Heart right ventricle (tissue), 16 donors: ENCODE measurements at regions of chr11 and their contacts with region 1.

Region 1: DNA sequence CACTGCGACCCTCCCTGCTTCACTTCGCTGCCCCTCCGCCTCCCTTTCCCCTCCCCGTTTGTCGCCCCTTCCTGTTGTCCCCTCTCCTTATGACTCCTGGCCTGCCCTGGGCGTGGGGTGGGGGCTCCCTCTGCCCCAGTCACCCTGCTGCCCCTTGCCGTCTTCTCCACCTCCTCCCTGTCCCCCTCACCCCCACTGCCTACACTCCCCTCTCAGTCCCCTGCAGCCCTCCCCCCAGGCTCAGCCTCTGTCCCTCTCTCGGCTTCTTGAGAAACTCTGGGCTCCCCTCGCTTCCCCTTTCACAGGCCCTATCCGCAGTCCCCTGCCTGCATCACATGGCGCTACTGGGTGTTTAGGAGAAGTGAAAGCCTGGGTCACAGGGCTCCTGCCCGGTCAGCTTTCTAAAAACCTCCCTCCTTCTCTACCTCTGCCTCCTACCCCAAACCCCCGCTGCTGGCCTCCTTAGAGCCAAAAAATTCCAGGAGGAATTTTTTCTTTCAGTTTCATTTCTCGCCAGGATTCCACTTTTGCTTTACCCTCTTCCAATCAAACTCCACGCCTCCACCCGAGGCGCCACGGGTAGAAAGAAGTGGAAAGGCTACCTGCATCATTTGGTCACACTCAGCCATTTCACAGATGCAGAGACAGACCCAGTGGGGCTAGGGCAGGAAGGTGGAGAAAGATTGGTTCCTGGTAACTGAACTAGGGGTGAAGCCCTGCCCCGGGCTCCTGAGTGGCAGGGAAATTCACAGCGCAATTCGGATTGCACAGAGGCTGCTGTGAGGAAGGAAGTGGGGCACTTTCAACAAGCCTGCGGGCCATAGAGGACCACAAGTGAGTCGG is at the start of gene SLC15A3:
- DNase-seq: peak; percentile 59 to 67
- ATAC-seq: peak; percentile 71 to 83 (median 81)
- H3K4me3 ChIP-seq: peak within 1 kb of the TSS; percentile 42 to 72 (median 56)
- H3K27ac ChIP-seq: peak within 1 kb of the TSS; percentile 80 to 96 (median 86)
- H3K4me1 ChIP-seq: peaks cover 0 to 75% (median 29%) of the 10 kb centered on the region in 9 donors
- H3K27me3 ChIP-seq: peaks cover 0 to 10% (median 5%) of the 10 kb centered on the region in 7 donors
- CTCF ChIP-seq: no peak
- total RNA-seq, gene SLC15A3: 9.5 to 52.4 (median 18.5) TPM

Region 2: DNA sequence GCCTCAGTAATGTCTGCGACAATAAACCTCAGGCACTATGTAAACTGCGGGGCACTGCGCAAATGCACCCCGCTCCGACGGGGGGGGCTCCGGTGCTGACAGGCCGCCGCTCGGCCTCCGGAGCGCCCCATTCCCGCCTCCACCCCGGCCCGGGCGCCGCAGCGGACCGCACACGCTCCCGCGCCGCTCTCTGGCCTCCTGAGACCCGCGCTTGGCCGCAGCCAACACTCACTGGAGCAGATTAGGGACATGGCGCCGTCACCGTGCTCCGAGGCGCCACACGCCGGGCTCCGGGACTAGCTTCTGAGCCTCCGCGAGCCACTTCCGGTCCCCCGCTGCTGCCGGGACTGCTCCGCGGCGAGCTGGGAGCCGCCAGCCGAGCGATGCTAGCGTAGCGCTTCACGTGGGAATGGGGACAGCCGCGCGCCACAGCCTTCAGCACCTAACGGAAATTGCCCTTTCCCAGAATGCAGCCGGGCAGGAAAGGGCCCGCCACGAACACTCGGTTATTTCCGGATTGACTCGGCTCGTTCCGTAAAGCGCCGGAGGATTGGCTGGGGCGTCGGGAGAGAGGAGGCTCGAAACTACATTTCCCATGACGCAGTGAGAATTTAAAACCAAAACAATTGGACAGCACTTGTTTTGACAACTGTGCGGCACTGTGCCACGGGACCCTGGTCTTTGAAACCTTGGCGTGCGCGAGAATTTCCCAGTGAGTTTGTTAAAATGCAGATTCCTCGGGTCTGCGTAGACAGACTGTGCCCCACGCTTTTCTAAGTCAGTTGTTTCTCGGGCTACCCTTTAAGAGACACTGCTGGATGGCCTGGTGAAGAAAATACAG is 45.8 kb before region 1 on chr11 and contains the start of gene PRPF19:
- intact Hi-C with region 1: loop called in 1 of 10 experiments (anchors 5 kb)
- DNase-seq: peak; percentile 98 to 99
- ATAC-seq: peak; percentile 96 to 99 (median 97)
- H3K4me3 ChIP-seq: peak within 1 kb of the TSS; percentile 64 to 98 (median 85)
- H3K27ac ChIP-seq: peak within 1 kb of the TSS; percentile 51 to 95 (median 92)
- H3K4me1 ChIP-seq: peaks cover 6 to 47% (median 33%) of the 10 kb centered on the region in 9 donors
- H3K27me3 ChIP-seq: no peaks in the 10 kb centered on the region
- CTCF ChIP-seq: no peak
- total RNA-seq, gene PRPF19: 32.0 to 49.7 (median 39.4) TPM

Region 3: GRCh38 chr11:60913793-60914632 is 38.1 kb before region 1 on chr11 and contains the start of gene TMEM109:
- intact Hi-C with region 1: loop called in 3 of 10 experiments (anchors 5 kb)
- DNase-seq: peak; percentile 89 to 90
- ATAC-seq: peak; percentile 82 to 89 (median 87)
- H3K4me3 ChIP-seq: peak within 1 kb of the TSS; percentile 63 to 93 (median 84)
- H3K27ac ChIP-seq: peak within 1 kb of the TSS; percentile 77 to 94 (median 90)
- H3K4me1 ChIP-seq: peaks cover 11 to 85% (median 65%) of the 10 kb centered on the region in 9 donors
- H3K27me3 ChIP-seq: no peaks in the 10 kb centered on the region
- CTCF ChIP-seq: no peak
- total RNA-seq, gene TMEM109: 78.6 to 115 (median 92.7) TPM